CD4-positive, alpha-beta memory T cell (primary cell): ENCODE measurements at regions of chr1 and their contacts with region 1.

Region 1: DNA sequence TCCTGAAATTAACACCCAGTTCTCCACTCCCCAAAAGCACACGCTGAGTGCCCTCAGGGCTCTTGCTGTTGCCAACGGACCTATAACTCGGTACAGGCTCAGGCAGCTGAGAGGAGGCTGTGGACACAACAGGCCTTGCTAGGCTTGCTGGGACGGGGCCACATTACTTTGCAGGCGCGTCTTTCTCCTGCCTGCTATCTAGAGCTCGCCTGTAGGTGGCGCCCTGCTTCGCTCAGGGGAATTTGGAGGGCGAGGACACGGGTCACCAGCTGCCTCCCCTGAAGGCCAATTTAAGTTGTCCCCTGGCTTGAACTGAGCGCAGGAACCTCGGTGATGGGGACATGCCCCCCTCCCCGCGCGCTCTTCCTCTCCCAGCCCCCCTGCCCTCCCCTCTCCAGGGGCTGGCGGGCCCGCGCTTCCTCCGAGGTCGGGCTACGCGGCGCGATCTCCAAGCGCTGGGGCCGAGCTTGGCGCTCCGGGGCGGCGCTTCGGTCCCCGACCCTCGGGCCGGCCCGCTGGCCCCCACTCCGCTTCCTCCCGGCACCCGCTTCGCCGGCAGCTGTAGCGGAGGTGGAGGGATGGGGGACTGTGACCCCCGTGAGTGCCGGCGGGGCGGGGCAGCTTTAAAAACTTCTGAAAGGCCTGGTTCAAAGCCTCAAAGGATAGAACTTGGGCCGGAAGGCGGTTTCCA is 32.4 kb upstream of the NFIA start:
- DNase-seq: peak; percentile 80 to 87 (median 81)
- H3K4me3 ChIP-seq: peak overlapping the region; percentile 36 to 72
- H3K4me3 Mint-ChIP-seq: peak overlapping the region; percentile 81 to 91 (median 83)
- H3K27ac ChIP-seq: peak overlapping the region; percentile 25
- H3K27ac Mint-ChIP-seq: peak overlapping the region in 1 of 7 donors; percentile 55
- H3K4me1 ChIP-seq: peaks cover 37% of the 10 kb centered on the region
- H3K4me1 Mint-ChIP-seq: peaks cover 13 to 35% (median 24%) of the 10 kb centered on the region in 4 donors
- H3K27me3 ChIP-seq: peaks cover 5% of the 10 kb centered on the region
- H3K27me3 Mint-ChIP-seq: peaks cover 21 to 32% of the 10 kb centered on the region in 2 donors

Region 2: DNA sequence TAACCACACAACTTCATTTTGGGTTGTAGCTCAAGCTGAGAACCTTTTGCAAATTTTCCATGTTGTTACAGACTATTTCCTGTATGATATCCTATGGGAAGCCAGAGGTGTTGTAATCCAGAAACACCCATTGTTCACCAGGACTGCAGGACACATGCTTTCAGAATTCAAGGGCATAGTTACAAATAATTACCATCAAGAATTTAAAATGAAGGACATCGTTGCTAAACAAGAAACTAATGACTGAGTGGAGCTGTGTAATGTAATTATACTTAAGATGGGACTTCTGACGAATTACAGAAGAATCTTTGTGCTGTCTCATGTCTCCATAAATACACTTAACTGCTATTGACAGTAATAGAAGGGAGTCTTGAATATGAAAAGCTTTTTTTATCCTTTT is 1282.9 kb before region 1 on chr1:
- CTCF ChIA-PET with region 1: no interaction called
- POLR2A ChIA-PET with region 1: no interaction called
- intact Hi-C with region 1: no loop called
- DNase-seq: no peak
- H3K4me3 ChIP-seq: no peak overlapping the region
- H3K4me3 Mint-ChIP-seq: no peak overlapping the region
- H3K27ac ChIP-seq: no peak overlapping the region
- H3K27ac Mint-ChIP-seq: no peak overlapping the region
- H3K4me1 ChIP-seq: no peaks in the 10 kb centered on the region
- H3K4me1 Mint-ChIP-seq: no peaks in the 10 kb centered on the region
- H3K27me3 ChIP-seq: no peaks in the 10 kb centered on the region
- H3K27me3 Mint-ChIP-seq: no peaks in the 10 kb centered on the region

Region 3: DNA sequence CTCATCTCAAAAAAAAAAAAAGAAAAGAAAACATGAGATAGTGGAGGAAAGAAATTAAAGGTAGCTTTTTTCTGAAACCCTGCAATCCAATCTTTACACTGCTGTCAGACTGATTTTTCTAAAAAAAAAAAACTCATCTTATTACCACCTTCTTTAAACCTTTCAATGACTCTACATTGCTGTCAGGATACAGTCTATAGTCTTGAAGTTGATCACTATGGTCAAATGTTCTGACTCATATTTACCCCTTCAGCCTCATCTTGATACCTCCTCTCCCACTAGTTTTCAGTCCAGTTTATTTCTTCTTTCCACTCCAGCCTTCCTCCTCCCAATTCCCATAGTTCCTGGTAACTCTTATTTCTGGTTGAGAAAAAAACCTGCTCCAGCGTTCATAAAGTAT is 14.7 kb after region 1 on chr1:
- CTCF ChIA-PET with region 1: interaction called, 29 read pairs
- POLR2A ChIA-PET with region 1: no interaction called
- intact Hi-C with region 1: no loop called
- DNase-seq: no peak
- H3K4me3 ChIP-seq: no peak overlapping the region
- H3K4me3 Mint-ChIP-seq: no peak overlapping the region
- H3K27ac ChIP-seq: no peak overlapping the region
- H3K27ac Mint-ChIP-seq: no peak overlapping the region
- H3K4me1 ChIP-seq: no peaks in the 10 kb centered on the region
- H3K4me1 Mint-ChIP-seq: no peaks in the 10 kb centered on the region
- H3K27me3 ChIP-seq: no peaks in the 10 kb centered on the region
- H3K27me3 Mint-ChIP-seq: peaks cover 0 to under 1% of the 10 kb centered on the region in 2 donors

Region 4: GRCh38 chr1:61120998-61121397 is 71.0 kb after region 1 on chr1:
- CTCF ChIA-PET with region 1: interaction called, 12 read pairs
- POLR2A ChIA-PET with region 1: no interaction called
- intact Hi-C with region 1: loop called (anchors 5 kb)
- DNase-seq: no peak
- H3K4me3 ChIP-seq: no peak overlapping the region
- H3K4me3 Mint-ChIP-seq: no peak overlapping the region
- H3K27ac ChIP-seq: no peak overlapping the region
- H3K27ac Mint-ChIP-seq: no peak overlapping the region
- H3K4me1 ChIP-seq: no peaks in the 10 kb centered on the region
- H3K4me1 Mint-ChIP-seq: peaks cover 0 to 3% (median 0%) of the 10 kb centered on the region in 4 donors
- H3K27me3 ChIP-seq: no peaks in the 10 kb centered on the region
- H3K27me3 Mint-ChIP-seq: no peaks in the 10 kb centered on the region

Region 5: GRCh38 chr1:61221642-61222041 is 171.6 kb after region 1 on chr1:
- CTCF ChIA-PET with region 1: interaction called, 15 read pairs
- POLR2A ChIA-PET with region 1: no interaction called
- intact Hi-C with region 1: no loop called
- DNase-seq: no peak
- H3K4me3 ChIP-seq: no peak overlapping the region
- H3K4me3 Mint-ChIP-seq: no peak overlapping the region
- H3K27ac ChIP-seq: no peak overlapping the region
- H3K27ac Mint-ChIP-seq: no peak overlapping the region
- H3K4me1 ChIP-seq: no peaks in the 10 kb centered on the region
- H3K4me1 Mint-ChIP-seq: no peaks in the 10 kb centered on the region
- H3K27me3 ChIP-seq: no peaks in the 10 kb centered on the region
- H3K27me3 Mint-ChIP-seq: no peaks in the 10 kb centered on the region

Region 6: GRCh38 chr1:61453111-61453961 is 403.3 kb after region 1 on chr1:
- CTCF ChIA-PET with region 1: interaction called, 44 read pairs
- POLR2A ChIA-PET with region 1: interaction called, 5 read pairs
- intact Hi-C with region 1: loop called (anchors 1 kb)
- DNase-seq: peak; percentile 58 to 72 (median 63)
- H3K4me3 ChIP-seq: no peak overlapping the region
- H3K4me3 Mint-ChIP-seq: peak overlapping the region in 2 of 8 donors; percentile 11 to 26
- H3K27ac ChIP-seq: no peak overlapping the region
- H3K27ac Mint-ChIP-seq: peak overlapping the region; percentile 32 to 91 (median 81)
- H3K4me1 ChIP-seq: no peaks in the 10 kb centered on the region
- H3K4me1 Mint-ChIP-seq: peaks cover 5 to 7% (median 5%) of the 10 kb centered on the region in 4 donors
- H3K27me3 ChIP-seq: no peaks in the 10 kb centered on the region
- H3K27me3 Mint-ChIP-seq: no peaks in the 10 kb centered on the region

Region 7: DNA sequence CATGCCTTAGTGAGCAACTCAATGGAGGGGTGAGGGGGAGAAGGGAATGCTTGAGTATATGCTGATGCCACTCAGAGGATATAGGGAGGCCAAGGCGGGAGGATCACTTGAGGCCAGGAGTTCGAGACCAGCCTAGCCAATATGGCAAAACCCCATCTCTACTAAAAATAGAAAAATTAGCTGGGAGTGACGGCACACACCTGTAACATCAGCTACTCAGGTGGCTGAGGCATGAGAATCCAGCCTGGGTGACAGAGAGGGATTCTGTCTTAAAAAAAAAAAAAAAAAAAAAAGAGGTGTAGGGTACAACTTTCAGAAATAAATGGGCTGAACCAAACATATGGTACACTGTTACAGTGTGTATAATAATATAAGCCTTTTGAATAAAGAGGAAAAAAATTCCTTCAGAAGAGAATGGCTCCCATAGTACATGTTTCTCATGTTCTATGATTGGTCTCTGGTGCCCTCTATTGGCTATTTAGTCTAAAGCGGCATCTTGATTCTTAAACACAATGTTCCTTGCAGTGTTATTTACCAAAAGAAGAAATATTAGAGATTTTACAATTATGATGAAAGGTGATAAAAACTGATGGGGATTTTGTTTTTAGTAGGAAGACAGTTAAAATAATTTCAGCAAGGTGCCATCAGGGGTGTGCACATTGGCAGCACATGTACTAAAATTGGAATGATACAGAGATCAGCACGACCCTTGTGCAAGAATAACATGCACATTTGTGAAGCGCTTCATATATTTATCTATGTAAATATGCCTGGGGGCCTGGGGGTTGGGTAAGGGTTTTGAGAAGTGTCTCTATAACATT is 802.1 kb after region 1 on chr1:
- CTCF ChIA-PET with region 1: interaction called, 41 read pairs
- POLR2A ChIA-PET with region 1: no interaction called
- intact Hi-C with region 1: loop called (anchors 1 kb)
- DNase-seq: peak; percentile 17 to 61 (median 48)
- H3K4me3 ChIP-seq: no peak overlapping the region
- H3K4me3 Mint-ChIP-seq: no peak overlapping the region
- H3K27ac ChIP-seq: no peak overlapping the region
- H3K27ac Mint-ChIP-seq: no peak overlapping the region
- H3K4me1 ChIP-seq: no peaks in the 10 kb centered on the region
- H3K4me1 Mint-ChIP-seq: peaks cover 0 to 2% (median under 1%) of the 10 kb centered on the region in 4 donors
- H3K27me3 ChIP-seq: no peaks in the 10 kb centered on the region
- H3K27me3 Mint-ChIP-seq: no peaks in the 10 kb centered on the region